CD8-positive, alpha-beta T cell (primary cell): ENCODE measurements at regions of chr1 and their contacts with region 1.

Region 1: DNA sequence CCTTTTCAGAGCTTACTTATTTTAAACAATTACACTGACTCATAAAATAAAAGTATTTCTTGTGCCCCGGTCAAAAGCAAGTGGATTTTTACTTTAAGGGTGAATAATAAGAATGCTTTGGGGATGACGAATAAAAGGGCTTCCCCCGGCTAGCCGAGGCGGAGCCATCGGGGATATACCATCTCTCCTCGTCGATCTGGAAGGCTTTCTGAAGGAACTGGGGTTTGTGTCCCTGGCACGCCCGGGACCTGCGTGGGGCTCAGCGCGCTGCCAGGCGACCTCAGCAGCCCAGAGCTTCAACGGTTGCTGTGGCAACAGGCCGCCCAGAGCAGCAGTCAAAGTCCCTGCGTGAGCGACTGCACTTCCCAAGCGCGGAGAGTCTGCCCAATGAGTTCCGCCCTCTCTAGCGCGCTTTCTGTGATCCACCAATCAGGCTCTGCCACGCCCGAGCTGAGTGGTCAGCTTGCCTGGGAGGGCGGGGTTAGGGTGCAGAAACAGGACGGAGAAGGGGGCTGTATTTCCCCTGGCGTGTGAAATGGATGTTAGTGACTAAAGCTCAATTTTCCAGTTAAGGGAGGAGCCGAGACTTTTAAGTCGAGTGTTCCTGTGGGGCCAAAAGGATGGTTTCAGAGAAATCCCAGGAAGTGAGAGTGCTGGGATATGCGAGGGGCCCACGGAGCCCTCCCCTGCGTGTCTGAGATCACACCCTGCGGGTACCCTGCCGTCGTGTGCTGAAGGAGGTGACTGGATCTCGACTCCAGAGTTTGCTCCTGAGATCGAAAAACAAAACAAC is 33.0 kb upstream of the MGST3 start:
- DNase-seq: peak; percentile 77 to 95 (median 89)
- ATAC-seq: peak; percentile 94
- H3K4me3 ChIP-seq: peak overlapping the region; percentile 60 to 63
- H3K4me3 Mint-ChIP-seq: peak overlapping the region; percentile 89
- H3K27ac ChIP-seq: peak overlapping the region; percentile 24 to 49
- H3K27ac Mint-ChIP-seq: peak overlapping the region; percentile 50
- H3K4me1 ChIP-seq: peaks cover 12% of the 10 kb centered on the region
- H3K4me1 Mint-ChIP-seq: peaks cover 19% of the 10 kb centered on the region
- H3K27me3 ChIP-seq: peaks cover 0 to 3% of the 10 kb centered on the region in 2 experiments
- H3K27me3 Mint-ChIP-seq: peaks cover 31% of the 10 kb centered on the region
- CTCF ChIP-seq: no peak

Region 2: GRCh38 chr1:165114022-165114888 is 483.8 kb before region 1 on chr1:
- CTCF ChIA-PET with region 1: no interaction called
- POLR2A ChIA-PET with region 1: no interaction called
- intact Hi-C with region 1: loop called in 1 of 2 experiments (anchors 10 kb)
- DNase-seq: no peak
- ATAC-seq: no peak
- H3K4me3 ChIP-seq: no peak overlapping the region
- H3K4me3 Mint-ChIP-seq: no peak overlapping the region
- H3K27ac ChIP-seq: no peak overlapping the region
- H3K27ac Mint-ChIP-seq: no peak overlapping the region
- H3K4me1 ChIP-seq: no peaks in the 10 kb centered on the region
- H3K4me1 Mint-ChIP-seq: no peaks in the 10 kb centered on the region
- H3K27me3 ChIP-seq: no peaks in the 10 kb centered on the region
- H3K27me3 Mint-ChIP-seq: peaks cover 28% of the 10 kb centered on the region
- CTCF ChIP-seq: peak; percentile 41

Region 3: DNA sequence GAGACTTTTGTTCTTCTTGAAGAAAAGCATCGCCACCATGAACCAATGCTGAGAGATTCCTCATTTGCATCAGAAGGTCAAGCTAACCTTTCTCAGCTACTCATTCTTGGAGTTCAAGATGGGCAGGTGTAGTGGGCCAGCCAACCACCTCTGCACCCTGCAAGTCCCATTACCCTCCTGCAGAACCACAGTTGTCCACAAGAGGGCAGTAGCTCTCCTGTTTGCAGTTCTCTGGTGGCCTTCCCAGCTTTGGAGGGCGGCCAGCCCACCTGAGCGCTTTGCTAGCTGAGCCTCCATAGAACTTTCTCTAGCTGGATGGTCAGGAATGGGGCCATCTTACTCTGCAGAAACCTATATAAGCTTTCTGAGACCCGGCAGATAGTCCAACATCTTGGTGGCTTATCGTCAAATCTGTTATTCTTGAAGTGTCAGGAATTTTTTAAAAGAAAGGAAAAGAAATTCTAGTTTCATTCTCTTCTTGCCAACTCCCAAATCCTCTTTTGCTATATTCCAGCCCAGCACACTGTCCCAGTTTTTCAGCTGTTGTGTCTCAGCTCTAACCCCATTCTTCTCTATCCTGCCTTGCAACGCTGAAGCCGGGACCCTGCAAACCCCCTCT is 230.6 kb before region 1 on chr1:
- CTCF ChIA-PET with region 1: interaction called, 87 read pairs
- POLR2A ChIA-PET with region 1: no interaction called
- intact Hi-C with region 1: loop called (anchors 1 kb)
- DNase-seq: peak; percentile 62 to 84 (median 77)
- ATAC-seq: peak; percentile 71
- H3K4me3 ChIP-seq: no peak overlapping the region
- H3K4me3 Mint-ChIP-seq: no peak overlapping the region
- H3K27ac ChIP-seq: no peak overlapping the region
- H3K27ac Mint-ChIP-seq: no peak overlapping the region
- H3K4me1 ChIP-seq: no peaks in the 10 kb centered on the region
- H3K4me1 Mint-ChIP-seq: no peaks in the 10 kb centered on the region
- H3K27me3 ChIP-seq: no peaks in the 10 kb centered on the region
- H3K27me3 Mint-ChIP-seq: peaks cover 60% of the 10 kb centered on the region
- CTCF ChIP-seq: peak; percentile 93

Region 4: DNA sequence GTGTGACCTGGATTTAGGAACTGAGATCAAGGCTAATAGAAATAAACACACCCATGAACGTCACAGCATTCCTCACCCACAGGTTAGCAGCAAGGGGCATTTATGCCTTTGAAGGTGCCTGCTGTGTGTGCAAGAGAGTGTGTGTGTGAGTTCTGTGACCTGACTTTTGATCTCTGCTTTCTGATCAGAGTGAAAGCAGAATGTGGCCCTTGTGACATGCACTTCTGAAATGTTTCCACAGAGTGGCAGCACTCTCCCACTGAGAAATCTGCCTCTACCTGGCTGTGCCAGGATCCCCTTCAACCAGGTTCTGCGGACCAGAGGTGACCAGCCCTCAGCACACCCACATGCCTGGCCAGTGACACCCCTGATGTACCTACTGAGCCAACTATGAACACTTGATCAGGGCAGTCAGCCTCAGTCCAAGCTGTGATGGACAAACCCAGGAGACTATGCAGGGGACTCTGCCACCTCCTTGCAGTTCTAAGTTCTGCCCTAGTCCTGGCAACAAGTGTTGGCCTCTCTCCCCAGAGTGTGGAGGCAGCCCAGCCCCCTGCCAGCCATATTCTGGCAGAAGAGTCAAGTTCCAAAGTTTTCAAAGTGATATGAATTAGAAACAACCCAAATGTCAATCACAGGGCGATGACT is 194.1 kb before region 1 on chr1:
- CTCF ChIA-PET with region 1: interaction called, 13 read pairs
- POLR2A ChIA-PET with region 1: no interaction called
- intact Hi-C with region 1: loop called in 1 of 2 experiments (anchors 1 kb)
- DNase-seq: peak in 3 of 9 experiments; percentile 18 to 44 (median 28)
- ATAC-seq: peak; percentile 38
- H3K4me3 ChIP-seq: no peak overlapping the region
- H3K4me3 Mint-ChIP-seq: no peak overlapping the region
- H3K27ac ChIP-seq: no peak overlapping the region
- H3K27ac Mint-ChIP-seq: no peak overlapping the region
- H3K4me1 ChIP-seq: no peaks in the 10 kb centered on the region
- H3K4me1 Mint-ChIP-seq: no peaks in the 10 kb centered on the region
- H3K27me3 ChIP-seq: no peaks in the 10 kb centered on the region
- H3K27me3 Mint-ChIP-seq: peaks cover 42% of the 10 kb centered on the region
- CTCF ChIP-seq: peak; percentile 22

Region 5: GRCh38 chr1:165630629-165631341 is 32.7 kb after region 1 on chr1 and contains the start of gene MGST3:
- CTCF ChIA-PET with region 1: no interaction called
- POLR2A ChIA-PET with region 1: no interaction called
- intact Hi-C with region 1: loop called (anchors 1 kb)
- DNase-seq: peak; percentile 81 to 96 (median 91)
- ATAC-seq: peak; percentile 93
- H3K4me3 ChIP-seq: peak within 1 kb of the TSS; percentile 62 to 71
- H3K4me3 Mint-ChIP-seq: no peak within 1 kb of the TSS
- H3K27ac ChIP-seq: peak within 1 kb of the TSS; percentile 56 to 89
- H3K27ac Mint-ChIP-seq: peak within 1 kb of the TSS; percentile 66
- H3K4me1 ChIP-seq: peaks cover 17% of the 10 kb centered on the region
- H3K4me1 Mint-ChIP-seq: peaks cover 19% of the 10 kb centered on the region
- H3K27me3 ChIP-seq: no peaks in the 10 kb centered on the region
- H3K27me3 Mint-ChIP-seq: no peaks in the 10 kb centered on the region
- CTCF ChIP-seq: no peak
- total RNA-seq, gene MGST3: 13.8 to 16.6 TPM

Region 6: GRCh38 chr1:165914136-165914798 is 316.2 kb after region 1 on chr1:
- CTCF ChIA-PET with region 1: interaction called, 283 read pairs
- POLR2A ChIA-PET with region 1: interaction called, 3 read pairs
- intact Hi-C with region 1: loop called (anchors 1 kb)
- DNase-seq: peak; percentile 42 to 83 (median 64)
- ATAC-seq: peak; percentile 96
- H3K4me3 ChIP-seq: no peak overlapping the region
- H3K4me3 Mint-ChIP-seq: no peak overlapping the region
- H3K27ac ChIP-seq: no peak overlapping the region
- H3K27ac Mint-ChIP-seq: no peak overlapping the region
- H3K4me1 ChIP-seq: no peaks in the 10 kb centered on the region
- H3K4me1 Mint-ChIP-seq: peaks cover 2% of the 10 kb centered on the region
- H3K27me3 ChIP-seq: no peaks in the 10 kb centered on the region
- H3K27me3 Mint-ChIP-seq: no peaks in the 10 kb centered on the region
- CTCF ChIP-seq: peak; percentile 96